Calu3 (cell line): ENCODE measurements at regions of chr3 and their contacts with region 1.

Region 1: GRCh38 chr3:122101646-122102045 is 46.5 kb downstream of the CD86 start:
- DNase-seq: peak; percentile 55
- H3K4me3 Mint-ChIP-seq: no peak overlapping the region
- H3K27ac Mint-ChIP-seq: no peak overlapping the region
- H3K4me1 Mint-ChIP-seq: peaks cover 26% of the 10 kb centered on the region
- H3K27me3 Mint-ChIP-seq: no peaks in the 10 kb centered on the region
- CTCF ChIP-seq: peak; percentile 52

Region 2: DNA sequence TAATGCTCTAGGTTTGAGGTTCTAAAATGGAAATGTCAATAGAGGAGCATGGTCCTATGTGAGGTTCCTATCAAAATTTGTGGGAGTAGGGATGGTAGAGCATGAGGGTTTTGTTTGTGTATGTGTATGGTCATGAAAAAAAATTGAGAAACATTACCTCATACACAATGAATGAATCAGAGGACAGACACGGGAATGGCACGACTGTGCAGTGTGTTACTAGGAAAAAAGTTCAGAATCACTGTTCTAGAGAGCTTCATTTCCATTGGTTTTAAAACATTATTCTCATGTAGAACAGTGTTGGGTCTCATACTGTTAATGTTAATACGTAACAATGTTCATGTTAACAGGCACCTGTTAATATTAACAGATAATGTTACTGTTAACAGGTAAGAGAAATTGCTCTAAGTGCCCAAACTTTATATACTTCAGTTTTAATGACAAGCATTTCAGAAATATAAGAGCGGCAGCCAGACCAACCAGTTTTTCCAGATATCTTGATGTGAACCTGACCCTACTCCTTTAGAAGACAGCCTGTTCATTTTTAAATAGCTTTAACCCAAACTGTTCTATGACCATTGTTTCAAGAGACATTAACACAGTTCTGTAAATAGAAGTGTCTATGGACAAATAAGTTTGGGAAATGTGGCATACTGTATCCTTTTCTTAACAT is 159.4 kb before region 1 on chr3:
- CTCF ChIA-PET with region 1: no interaction called
- intact Hi-C with region 1: no loop called
- DNase-seq: peak; percentile 35
- H3K4me3 Mint-ChIP-seq: no peak overlapping the region
- H3K27ac Mint-ChIP-seq: peak overlapping the region; percentile 72
- H3K4me1 Mint-ChIP-seq: peaks cover 22% of the 10 kb centered on the region
- H3K27me3 Mint-ChIP-seq: no peaks in the 10 kb centered on the region
- CTCF ChIP-seq: no peak

Region 3: DNA sequence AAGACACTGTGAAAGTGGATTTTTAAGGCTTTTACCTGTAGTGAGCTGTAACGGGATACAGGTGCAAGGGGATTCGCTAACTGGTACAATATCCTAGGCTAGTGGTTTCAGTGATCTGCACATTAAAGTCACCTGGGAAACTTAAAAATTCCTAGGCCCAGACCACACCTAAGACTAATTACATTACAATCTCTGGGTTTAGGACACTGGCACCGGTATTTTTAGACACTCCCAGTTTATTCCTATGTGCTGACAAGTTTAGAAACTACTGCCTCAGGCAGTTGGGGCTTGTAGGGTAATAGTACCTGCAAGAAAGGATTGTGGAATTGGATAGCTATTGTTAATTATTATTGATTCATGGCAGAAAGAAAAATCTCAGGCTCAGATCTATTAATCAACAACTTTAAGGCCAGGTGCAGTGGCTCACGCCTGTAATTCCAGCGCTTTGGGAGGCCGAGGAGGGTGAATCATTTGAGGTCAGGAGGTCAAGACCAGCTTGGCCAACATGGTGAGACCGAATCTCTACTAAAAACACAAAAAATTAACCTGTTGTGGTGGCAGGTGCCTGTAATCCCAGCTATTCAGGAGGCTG is 31.4 kb after region 1 on chr3:
- CTCF ChIA-PET with region 1: interaction called, 4 read pairs
- intact Hi-C with region 1: loop called (anchors 2 kb)
- DNase-seq: peak; percentile 74
- H3K4me3 Mint-ChIP-seq: peak overlapping the region; percentile 36
- H3K27ac Mint-ChIP-seq: peak overlapping the region; percentile 67
- H3K4me1 Mint-ChIP-seq: peaks cover 38% of the 10 kb centered on the region
- H3K27me3 Mint-ChIP-seq: no peaks in the 10 kb centered on the region
- CTCF ChIP-seq: no peak

Region 4: DNA sequence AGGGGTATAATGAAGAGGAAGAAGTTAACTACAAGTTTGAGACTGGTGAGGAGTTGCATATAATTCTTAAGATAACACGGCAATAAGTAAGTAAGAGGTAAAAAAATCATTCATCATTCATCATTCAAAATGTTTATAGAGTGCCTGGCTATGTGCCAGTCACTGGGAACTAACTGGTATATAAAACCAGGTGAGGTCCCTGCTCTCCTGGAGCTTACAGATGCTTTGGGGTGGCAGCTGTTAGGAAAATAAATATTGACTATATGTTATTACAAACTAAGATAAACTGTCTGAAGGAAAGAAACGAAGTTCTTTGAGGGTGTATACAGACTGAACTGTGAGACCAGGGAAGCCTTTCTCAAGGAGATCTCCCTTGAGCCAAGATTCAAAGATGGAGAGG is 84.7 kb after region 1 on chr3:
- CTCF ChIA-PET with region 1: interaction called, 6 read pairs
- intact Hi-C with region 1: loop called (anchors 5 kb)
- DNase-seq: no peak
- H3K4me3 Mint-ChIP-seq: no peak overlapping the region
- H3K27ac Mint-ChIP-seq: no peak overlapping the region
- H3K4me1 Mint-ChIP-seq: peaks cover 58% of the 10 kb centered on the region
- H3K27me3 Mint-ChIP-seq: peaks cover 24% of the 10 kb centered on the region
- CTCF ChIP-seq: no peak

Region 5: DNA sequence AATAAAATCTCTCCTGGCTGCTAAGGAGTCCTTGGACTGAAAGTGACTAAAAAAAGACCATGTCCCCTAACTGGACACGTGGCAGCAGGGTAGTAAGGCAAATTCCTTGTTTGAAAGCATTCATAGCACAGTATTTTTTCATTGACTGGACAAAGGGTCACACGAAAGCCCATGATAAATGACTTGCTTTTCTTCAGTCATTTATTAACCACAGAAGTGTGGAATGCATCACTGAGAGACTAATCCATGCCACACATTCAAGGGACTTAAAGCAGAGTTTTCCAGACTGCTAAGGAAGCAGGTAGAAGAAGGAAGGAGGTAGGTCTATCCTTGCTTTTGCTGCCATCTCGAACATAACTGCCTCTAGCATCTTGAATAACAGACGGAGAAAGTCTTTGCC is 113.1 kb after region 1 on chr3:
- CTCF ChIA-PET with region 1: no interaction called
- intact Hi-C with region 1: loop called (anchors 1 kb)
- DNase-seq: no peak
- H3K4me3 Mint-ChIP-seq: no peak overlapping the region
- H3K27ac Mint-ChIP-seq: no peak overlapping the region
- H3K4me1 Mint-ChIP-seq: peaks cover 14% of the 10 kb centered on the region
- H3K27me3 Mint-ChIP-seq: no peaks in the 10 kb centered on the region
- CTCF ChIP-seq: no peak

Region 6: GRCh38 chr3:122258757-122259371 is 157.2 kb after region 1 on chr3:
- CTCF ChIA-PET with region 1: interaction called, 64 read pairs
- intact Hi-C with region 1: loop called (anchors 1 kb)
- DNase-seq: peak; percentile 79
- H3K4me3 Mint-ChIP-seq: no peak overlapping the region
- H3K27ac Mint-ChIP-seq: no peak overlapping the region
- H3K4me1 Mint-ChIP-seq: no peaks in the 10 kb centered on the region
- H3K27me3 Mint-ChIP-seq: no peaks in the 10 kb centered on the region
- CTCF ChIP-seq: peak; percentile 60

Region 7: DNA sequence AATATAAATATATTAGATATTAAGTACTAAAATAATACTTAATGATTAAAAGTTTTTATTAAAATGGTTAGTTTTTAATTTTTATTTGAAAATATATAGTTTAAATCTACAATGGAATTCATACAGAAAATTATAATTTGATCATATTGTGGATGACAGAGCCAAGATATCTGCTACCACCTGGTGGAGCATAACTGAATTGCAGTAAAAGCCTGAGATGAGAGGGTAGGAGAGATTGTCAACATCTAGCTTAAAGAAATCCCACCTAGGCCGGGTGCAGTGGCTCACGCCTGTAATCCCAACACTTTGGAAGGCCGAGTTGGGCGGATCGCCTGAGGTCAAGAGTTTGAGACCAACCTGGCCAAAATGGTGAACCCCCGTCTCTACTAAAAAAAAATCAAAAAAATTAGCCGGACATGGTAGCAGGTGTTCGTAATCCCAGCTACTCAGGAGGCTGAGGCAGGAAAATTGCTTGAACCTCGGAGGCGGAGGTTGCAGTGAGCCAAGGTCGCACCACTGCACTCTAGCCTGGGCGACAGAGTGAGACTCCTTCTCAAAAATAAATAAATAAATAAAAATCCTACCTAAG is 198.3 kb after region 1 on chr3:
- CTCF ChIA-PET with region 1: no interaction called
- intact Hi-C with region 1: loop called (anchors 2 kb)
- DNase-seq: peak; percentile 38
- H3K4me3 Mint-ChIP-seq: no peak overlapping the region
- H3K27ac Mint-ChIP-seq: no peak overlapping the region
- H3K4me1 Mint-ChIP-seq: no peaks in the 10 kb centered on the region
- H3K27me3 Mint-ChIP-seq: no peaks in the 10 kb centered on the region
- CTCF ChIP-seq: peak; percentile 27

Region 8: GRCh38 chr3:122356415-122356814 is 254.8 kb after region 1 on chr3:
- CTCF ChIA-PET with region 1: interaction called, 4 read pairs
- intact Hi-C with region 1: loop called (anchors 2 kb)
- DNase-seq: peak; percentile 66
- H3K4me3 Mint-ChIP-seq: no peak overlapping the region
- H3K27ac Mint-ChIP-seq: no peak overlapping the region
- H3K4me1 Mint-ChIP-seq: no peaks in the 10 kb centered on the region
- H3K27me3 Mint-ChIP-seq: no peaks in the 10 kb centered on the region
- CTCF ChIP-seq: peak; percentile 27

Region 9: GRCh38 chr3:122576174-122576940 is 474.7 kb after region 1 on chr3:
- CTCF ChIA-PET with region 1: no interaction called
- intact Hi-C with region 1: no loop called
- DNase-seq: no peak
- H3K4me3 Mint-ChIP-seq: no peak overlapping the region
- H3K27ac Mint-ChIP-seq: no peak overlapping the region
- H3K4me1 Mint-ChIP-seq: peaks cover 14% of the 10 kb centered on the region
- H3K27me3 Mint-ChIP-seq: no peaks in the 10 kb centered on the region
- CTCF ChIP-seq: no peak